PC-9 (cell line): ENCODE measurements at regions of chr15 and their contacts with region 1.

Region 1: GRCh38 chr15:90954712-90955671 is at the start of gene RCCD1:
- DNase-seq: peak; percentile 90 to 92
- H3K4me3 ChIP-seq: peak within 1 kb of the TSS; percentile 98
- H3K27ac ChIP-seq: peak within 1 kb of the TSS; percentile 88
- H3K4me1 ChIP-seq: peaks cover 10% of the 10 kb centered on the region
- H3K27me3 ChIP-seq: no peaks in the 10 kb centered on the region
- CTCF ChIP-seq: no peak
- total RNA-seq, gene RCCD1: 51.4 and 51.5 TPM in 2 replicates

Region 2: GRCh38 chr15:90968434-90968833 is 13.4 kb after region 1 on chr15:
- CTCF ChIA-PET with region 1: interaction called, 10 read pairs
- POLR2A ChIA-PET with region 1: no interaction called
- intact Hi-C with region 1: no loop called
- DNase-seq: no peak
- H3K4me3 ChIP-seq: no peak overlapping the region
- H3K27ac ChIP-seq: no peak overlapping the region; the same call in 1 of the 2 replicates
- H3K4me1 ChIP-seq: no peaks in the 10 kb centered on the region
- H3K27me3 ChIP-seq: no peaks in the 10 kb centered on the region
- CTCF ChIP-seq: no peak

Region 3: GRCh38 chr15:91022075-91022835 is 67.3 kb after region 1 on chr15 and contains the start of gene VPS33B:
- CTCF ChIA-PET with region 1: interaction called, 12 read pairs
- POLR2A ChIA-PET with region 1: interaction called, 5 read pairs
- intact Hi-C with region 1: no loop called
- DNase-seq: peak; percentile 71 to 78
- H3K4me3 ChIP-seq: peak within 1 kb of the TSS; percentile 90
- H3K27ac ChIP-seq: no peak within 1 kb of the TSS
- H3K4me1 ChIP-seq: peaks cover 21% of the 10 kb centered on the region
- H3K27me3 ChIP-seq: no peaks in the 10 kb centered on the region
- CTCF ChIP-seq: no peak
- total RNA-seq, gene VPS33B: 12.1 and 13.6 TPM in 2 replicates

Region 4: GRCh38 chr15:91032919-91033803 is 78.2 kb after region 1 on chr15:
- CTCF ChIA-PET with region 1: interaction called, 4 read pairs
- POLR2A ChIA-PET with region 1: no interaction called
- intact Hi-C with region 1: loop called (anchors 5 kb)
- DNase-seq: peak; percentile 74 to 88
- H3K4me3 ChIP-seq: no peak overlapping the region
- H3K27ac ChIP-seq: no peak overlapping the region
- H3K4me1 ChIP-seq: no peaks in the 10 kb centered on the region
- H3K27me3 ChIP-seq: peaks cover 21% of the 10 kb centered on the region; the same call in 1 of the 2 replicates
- CTCF ChIP-seq: peak; percentile 83

Region 5: DNA sequence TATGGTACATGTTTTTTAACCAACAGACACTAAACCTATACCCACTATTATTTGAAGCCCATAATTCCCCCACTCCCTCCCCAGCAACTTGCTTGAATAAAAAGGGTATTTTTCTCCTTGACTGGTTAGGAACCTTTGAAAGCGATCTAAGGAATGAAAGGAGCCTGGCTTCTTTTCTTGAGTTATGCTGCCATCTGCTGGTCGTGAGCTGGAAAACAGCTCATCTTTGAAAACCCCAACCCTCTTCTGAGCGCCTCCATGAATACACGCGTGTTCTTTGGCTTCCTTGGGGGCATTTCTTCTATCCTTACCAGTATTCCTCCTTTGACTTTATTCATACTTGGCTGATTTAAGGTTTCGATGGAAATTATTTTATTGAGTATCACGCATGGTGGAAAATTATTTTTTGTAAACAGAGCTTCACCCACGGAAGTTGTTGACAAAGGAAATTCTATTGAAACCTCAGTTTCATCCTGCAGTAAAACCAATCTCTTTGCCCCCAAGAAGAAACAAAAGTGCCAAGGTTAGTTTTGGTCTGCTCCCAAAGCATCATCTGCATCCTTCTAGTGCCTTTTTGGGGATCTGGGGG is 316.7 kb after region 1 on chr15:
- CTCF ChIA-PET with region 1: no interaction called
- POLR2A ChIA-PET with region 1: no interaction called
- intact Hi-C with region 1: loop called (anchors 5 kb)
- DNase-seq: peak in 1 of 2 experiments; percentile 34
- H3K4me3 ChIP-seq: no peak overlapping the region
- H3K27ac ChIP-seq: no peak overlapping the region
- H3K4me1 ChIP-seq: no peaks in the 10 kb centered on the region
- H3K27me3 ChIP-seq: peaks cover 15% of the 10 kb centered on the region; the same call in 1 of the 2 replicates
- CTCF ChIP-seq: peak; percentile 87

Region 6: DNA sequence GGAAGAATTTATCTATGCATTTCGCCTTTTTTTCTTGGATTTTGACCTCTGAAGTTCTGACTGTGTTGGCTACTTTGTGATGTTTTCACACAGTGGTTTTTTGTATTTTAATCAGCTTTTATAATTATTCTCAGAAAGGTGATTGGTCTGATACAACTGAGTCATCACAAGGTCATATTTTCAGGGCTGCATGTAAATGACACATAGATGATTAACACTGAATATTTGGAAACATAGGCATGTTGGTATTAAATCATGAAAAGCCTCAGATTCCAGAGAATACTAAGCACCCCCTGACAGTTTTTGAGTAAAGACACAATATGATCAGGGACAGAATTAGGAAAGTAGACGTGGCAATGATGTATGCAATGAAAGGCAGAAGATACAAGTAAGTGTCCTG is 723.0 kb after region 1 on chr15:
- CTCF ChIA-PET with region 1: no interaction called
- POLR2A ChIA-PET with region 1: no interaction called
- intact Hi-C with region 1: no loop called
- DNase-seq: no peak
- H3K4me3 ChIP-seq: no peak overlapping the region
- H3K27ac ChIP-seq: no peak overlapping the region
- H3K4me1 ChIP-seq: no peaks in the 10 kb centered on the region
- H3K27me3 ChIP-seq: no peaks in the 10 kb centered on the region
- CTCF ChIP-seq: no peak